H1 (cell line): ENCODE measurements at regions of chr2 and their contacts with region 1.

Region 1: DNA sequence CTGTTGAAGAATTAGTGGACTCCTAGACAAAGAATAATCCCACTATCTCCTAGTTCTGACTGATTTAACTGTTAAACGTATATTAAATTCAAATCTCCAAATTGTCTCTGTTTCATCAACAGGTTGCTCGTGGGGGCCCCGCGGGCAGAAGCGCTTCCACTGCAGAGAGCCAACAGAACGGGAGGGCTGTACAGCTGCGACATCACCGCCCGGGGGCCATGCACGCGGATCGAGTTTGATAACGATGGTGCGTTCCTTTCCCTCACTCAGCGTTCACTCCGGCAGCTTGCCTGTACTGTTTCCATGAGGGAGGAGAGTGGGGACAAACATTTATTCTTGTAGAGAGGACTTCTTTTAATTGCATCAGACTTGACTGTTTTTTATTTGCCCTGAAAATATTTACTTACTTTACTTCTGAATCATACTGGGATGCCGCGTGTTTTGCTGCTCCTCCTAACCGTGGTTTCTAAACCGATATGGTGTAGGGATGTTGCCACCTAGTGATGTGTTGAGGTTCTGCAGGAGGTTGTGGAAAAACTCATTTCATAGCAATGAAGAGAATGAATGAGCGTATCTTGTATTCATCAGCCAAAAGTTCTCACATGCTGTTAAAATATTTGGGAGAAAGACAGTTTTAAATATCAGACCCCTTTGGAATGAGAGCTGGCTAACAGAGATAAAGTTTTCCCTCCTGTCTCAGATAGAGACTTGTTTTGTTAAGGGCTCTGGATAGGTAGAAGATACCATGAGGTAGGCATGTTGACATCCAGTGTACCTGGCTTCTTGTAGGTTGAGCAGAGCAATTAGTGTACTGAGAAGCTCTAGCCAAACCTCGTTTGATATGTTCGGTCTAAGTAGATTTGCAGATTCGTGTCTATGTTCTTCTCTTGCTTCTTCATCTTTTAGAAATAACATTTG is 38.3 kb downstream of the ITGA6 start:
- DNase-seq: peak in 1 of 2 experiments; percentile 73
- H3K4me3 ChIP-seq: no peak overlapping the region
- H3K27ac ChIP-seq: no peak overlapping the region
- H3K4me1 ChIP-seq: peaks cover 10 to 19% (median 11%) of the 10 kb centered on the region in 4 experiments; a peak in 6 of 7 replicates
- H3K27me3 ChIP-seq: no peaks in the 10 kb centered on the region
- CTCF ChIP-seq: peak; percentile 30 to 86 (median 67)
- EP300 ChIP-seq: no peak
- POLR2A ChIP-seq: no peak
- RAD21 ChIP-seq: peak; percentile 93 to 94

Region 2: DNA sequence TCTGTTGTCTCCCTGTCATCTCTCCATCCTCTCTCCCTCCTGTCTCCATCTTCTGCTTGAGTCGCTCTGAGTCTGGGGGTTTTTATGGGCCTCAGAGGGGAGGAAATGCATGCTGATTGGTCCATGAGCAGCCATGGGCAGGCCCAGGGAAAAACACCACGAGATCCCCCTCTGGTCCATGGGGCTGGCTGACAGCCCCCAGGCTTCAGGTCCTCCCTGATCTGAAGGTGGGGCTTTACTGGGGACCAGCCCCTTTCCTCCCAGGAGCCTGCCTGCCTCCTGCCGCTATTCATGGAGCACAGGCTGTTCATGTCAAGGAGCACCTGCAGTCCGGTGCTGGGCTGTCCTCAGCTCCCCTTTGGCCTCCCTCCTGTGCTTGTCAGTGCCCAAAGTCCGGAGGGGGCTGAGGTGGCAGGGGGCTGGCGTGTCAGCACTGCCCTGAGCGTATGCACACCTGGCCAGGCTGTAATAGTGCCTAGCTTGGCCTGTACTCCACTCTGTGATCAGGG is 303.4 kb before region 1 on chr2:
- CTCF ChIA-PET with region 1: interaction called, 206 read pairs
- POLR2A ChIA-PET with region 1: interaction called, 3 read pairs
- DNase-seq: no peak
- H3K4me3 ChIP-seq: no peak overlapping the region
- H3K27ac ChIP-seq: no peak overlapping the region
- H3K4me1 ChIP-seq: no peaks in the 10 kb centered on the region; a peak in 2 of 7 replicates
- H3K27me3 ChIP-seq: no peaks in the 10 kb centered on the region
- CTCF ChIP-seq: no peak
- EP300 ChIP-seq: no peak
- POLR2A ChIP-seq: no peak
- RAD21 ChIP-seq: no peak

Region 3: GRCh38 chr2:172208791-172209325 is 256.8 kb before region 1 on chr2:
- CTCF ChIA-PET with region 1: interaction called, 21 read pairs
- POLR2A ChIA-PET with region 1: no interaction called
- DNase-seq: no peak
- H3K4me3 ChIP-seq: no peak overlapping the region
- H3K27ac ChIP-seq: no peak overlapping the region
- H3K4me1 ChIP-seq: peaks cover 0 to 8% (median 2%) of the 10 kb centered on the region in 4 experiments; a peak in 2 of 7 replicates
- H3K27me3 ChIP-seq: no peaks in the 10 kb centered on the region
- CTCF ChIP-seq: no peak
- EP300 ChIP-seq: no peak
- POLR2A ChIP-seq: no peak
- RAD21 ChIP-seq: peak in 1 of 2 experiments; percentile 13; a peak in 1 of 4 replicates

Region 4: GRCh38 chr2:172285010-172285621 is 180.6 kb before region 1 on chr2:
- CTCF ChIA-PET with region 1: interaction called, 10 read pairs
- POLR2A ChIA-PET with region 1: no interaction called
- DNase-seq: no peak
- H3K4me3 ChIP-seq: no peak overlapping the region
- H3K27ac ChIP-seq: no peak overlapping the region
- H3K4me1 ChIP-seq: peaks cover 6 to 12% (median 9%) of the 10 kb centered on the region in 4 experiments
- H3K27me3 ChIP-seq: no peaks in the 10 kb centered on the region
- CTCF ChIP-seq: no peak
- EP300 ChIP-seq: no peak
- POLR2A ChIP-seq: no peak
- RAD21 ChIP-seq: no peak

Region 5: DNA sequence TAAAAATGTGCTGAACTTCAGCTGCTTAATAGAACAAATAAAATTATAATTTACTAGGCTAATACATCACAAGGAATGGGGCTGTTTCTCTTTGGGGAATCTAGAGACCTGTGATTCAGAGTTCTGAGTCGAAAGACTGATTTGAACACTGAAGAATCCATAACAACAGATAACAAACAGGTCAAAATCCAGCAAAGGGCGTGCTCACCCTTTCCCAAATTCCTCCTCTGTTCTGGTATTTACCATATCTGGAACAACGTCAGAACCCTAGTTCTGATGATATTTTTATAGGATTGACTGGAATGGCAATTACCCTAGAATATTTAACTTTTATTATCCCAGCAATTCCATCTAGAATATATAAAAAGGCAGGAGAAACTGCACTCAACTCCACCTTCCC is 104.3 kb before region 1 on chr2:
- CTCF ChIA-PET with region 1: interaction called, 11 read pairs
- POLR2A ChIA-PET with region 1: no interaction called
- DNase-seq: no peak
- H3K4me3 ChIP-seq: no peak overlapping the region
- H3K27ac ChIP-seq: no peak overlapping the region
- H3K4me1 ChIP-seq: no peaks in the 10 kb centered on the region
- H3K27me3 ChIP-seq: no peaks in the 10 kb centered on the region
- CTCF ChIP-seq: no peak
- EP300 ChIP-seq: no peak
- POLR2A ChIP-seq: no peak
- RAD21 ChIP-seq: no peak

Region 6: DNA sequence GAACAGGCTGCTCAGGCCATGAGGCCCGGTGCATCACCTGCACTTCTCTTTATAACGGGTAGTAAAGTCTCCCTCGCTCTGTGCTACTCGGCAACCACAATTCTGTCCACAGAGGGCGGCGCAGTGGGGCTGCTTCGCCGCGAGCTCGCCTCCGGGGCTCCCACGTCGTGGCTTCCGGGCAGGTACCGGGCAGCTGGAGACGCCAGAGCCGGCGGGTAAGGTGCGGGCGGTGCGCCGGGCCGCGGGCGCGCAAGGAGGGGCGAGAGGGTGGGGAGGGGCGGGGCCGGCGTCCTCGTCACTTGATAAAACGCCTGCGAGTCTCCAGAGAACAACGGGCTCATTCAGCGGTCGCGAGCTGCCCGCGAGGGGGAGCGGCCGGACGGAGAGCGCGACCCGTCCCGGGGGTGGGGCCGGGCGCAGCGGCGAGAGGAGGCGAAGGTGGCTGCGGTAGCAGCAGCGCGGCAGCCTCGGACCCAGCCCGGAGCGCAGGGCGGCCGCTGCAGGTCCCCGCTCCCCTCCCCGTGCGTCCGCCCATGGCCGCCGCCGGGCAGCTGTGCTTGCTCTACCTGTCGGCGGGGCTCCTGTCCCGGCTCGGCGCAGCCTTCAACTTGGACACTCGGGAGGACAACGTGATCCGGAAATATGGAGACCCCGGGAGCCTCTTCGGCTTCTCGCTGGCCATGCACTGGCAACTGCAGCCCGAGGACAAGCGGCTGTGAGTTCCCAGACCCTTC is 38.3 kb before region 1 on chr2 and contains the start of gene ITGA6:
- CTCF ChIA-PET with region 1: interaction called, 634 read pairs
- POLR2A ChIA-PET with region 1: interaction called, 7 read pairs
- DNase-seq: peak in 1 of 2 experiments; percentile 82
- H3K4me3 ChIP-seq: peak within 1 kb of the TSS; percentile 78 to 88 (median 84)
- H3K27ac ChIP-seq: peak within 1 kb of the TSS; percentile 70
- H3K4me1 ChIP-seq: peaks cover 4 to 24% (median 11%) of the 10 kb centered on the region in 4 experiments; a peak in 5 of 7 replicates
- H3K27me3 ChIP-seq: peaks cover 0 to 3% (median 1%) of the 10 kb centered on the region in 4 experiments; a peak in 3 of 7 replicates
- CTCF ChIP-seq: peak in 1 of 3 experiments; percentile 32; a peak in 2 of 4 replicates
- EP300 ChIP-seq: no peak
- POLR2A ChIP-seq: peak; percentile 60 to 83
- RAD21 ChIP-seq: peak; percentile 6 to 27; a peak in 2 of 4 replicates
- total RNA-seq, gene ITGA6: 117 and 118 TPM in 2 replicates

Region 7: GRCh38 chr2:172639823-172640222 is 174.1 kb after region 1 on chr2:
- CTCF ChIA-PET with region 1: no interaction called
- POLR2A ChIA-PET with region 1: no interaction called
- DNase-seq: no peak
- H3K4me3 ChIP-seq: no peak overlapping the region
- H3K27ac ChIP-seq: no peak overlapping the region
- H3K4me1 ChIP-seq: no peaks in the 10 kb centered on the region
- H3K27me3 ChIP-seq: no peaks in the 10 kb centered on the region
- CTCF ChIP-seq: no peak
- EP300 ChIP-seq: no peak
- POLR2A ChIP-seq: no peak
- RAD21 ChIP-seq: no peak